Cardiac septum (tissue), 1 donor: ENCODE measurements at regions of chr17 and their contacts with region 1.

Region 1: GRCh38 chr17:21689604-21690003 is 2.7 kb upstream of the KCNJ18 start:
- DNase-seq: no peak

Region 2: DNA sequence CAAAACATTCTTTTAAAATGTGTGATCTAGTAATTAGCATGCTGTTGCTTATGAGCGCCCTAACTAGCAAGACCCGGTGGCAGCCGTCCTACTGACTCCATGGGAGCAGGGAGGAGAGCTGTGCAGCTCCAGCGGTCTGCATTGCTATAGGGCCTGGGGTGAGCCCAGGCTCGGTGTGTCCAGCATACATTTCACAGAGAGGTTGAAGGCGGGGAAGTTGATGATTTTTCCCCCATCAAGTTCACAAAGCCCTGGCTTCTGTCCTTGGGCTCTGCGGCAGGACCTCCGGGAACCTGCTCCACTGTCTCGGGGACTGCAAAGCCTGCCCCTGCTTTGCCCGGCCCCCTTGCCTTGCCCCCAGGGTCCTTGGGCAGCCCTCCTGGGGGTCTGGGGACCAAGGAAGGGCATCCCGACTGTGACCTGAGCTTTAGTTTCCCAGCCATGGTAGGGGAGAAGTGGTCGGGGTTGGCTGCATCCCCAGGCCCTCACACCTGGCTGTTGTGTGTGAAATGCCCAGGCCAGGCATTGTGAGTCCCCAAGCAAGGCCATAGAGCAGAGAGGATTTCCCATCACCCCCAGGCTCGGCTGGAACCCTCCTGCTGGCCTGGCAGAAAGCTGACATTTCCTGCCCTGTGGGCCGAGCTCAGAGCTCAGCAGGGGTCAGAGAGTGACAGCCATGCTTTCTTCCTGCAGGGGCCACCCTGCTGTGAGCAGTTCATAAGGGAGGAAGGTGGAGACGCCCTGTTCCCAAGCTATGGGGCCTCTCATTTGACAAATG is 288.6 kb before region 1 on chr17:
- intact Hi-C with region 1: loop called (anchors 5 kb)
- DNase-seq: no peak

Region 3: GRCh38 chr17:21511363-21512198 is 178.0 kb before region 1 on chr17:
- intact Hi-C with region 1: no loop called
- DNase-seq: peak; percentile 92